H1 (cell line): ENCODE measurements at regions of chr13 and their contacts with region 1.

Region 1: DNA sequence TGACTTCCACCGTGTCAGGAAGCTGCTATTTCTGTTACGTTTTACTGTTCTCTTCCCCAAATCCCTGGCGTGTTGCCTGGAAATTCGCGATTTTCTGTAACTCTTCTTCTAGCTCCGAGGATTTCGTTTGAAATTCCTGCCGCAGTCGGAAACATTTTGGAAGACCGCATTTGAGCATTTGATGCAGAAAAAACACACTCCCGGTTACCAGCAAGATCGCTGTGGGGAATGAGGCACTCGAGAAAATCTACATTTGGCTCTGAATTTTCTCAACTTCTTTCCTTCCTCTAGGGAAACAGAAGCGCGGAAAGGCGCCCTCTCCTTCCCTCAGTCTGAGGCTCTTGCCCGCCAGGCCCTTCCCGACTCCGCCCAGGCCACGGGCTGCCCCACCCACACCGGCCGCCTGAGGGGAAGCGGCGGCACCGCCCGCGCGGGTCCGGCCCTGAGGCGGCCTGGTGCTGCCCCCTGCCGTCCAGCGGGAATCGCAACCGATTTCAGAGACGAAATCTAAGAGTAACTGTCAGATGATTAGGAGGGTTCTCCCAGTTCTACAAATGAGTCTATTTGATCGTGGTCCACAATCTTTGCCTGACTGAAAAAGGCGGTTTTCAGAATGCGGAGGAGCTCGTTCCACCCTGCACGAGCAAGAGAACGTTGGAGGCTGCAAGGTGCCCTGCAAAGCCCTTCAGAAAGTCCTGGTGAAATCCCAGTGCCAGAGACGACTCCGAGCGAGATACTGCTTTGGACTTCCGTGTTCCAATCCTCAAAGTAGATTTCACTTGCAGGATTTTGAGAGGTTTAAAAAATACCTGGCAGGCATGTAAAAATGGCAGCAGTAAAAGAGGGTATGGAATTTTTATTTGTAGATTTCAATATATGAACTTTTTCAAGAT is 18.4 kb upstream of the TUBGCP3 start:
- DNase-seq: peak; percentile 57 to 98
- H3K4me3 ChIP-seq: peak overlapping the region; percentile 35 to 71 (median 50); a peak in 7 of 8 replicates
- H3K27ac ChIP-seq: peak overlapping the region; percentile 28; the same call in 1 of the 2 replicates
- H3K4me1 ChIP-seq: peaks cover 0 to 2% (median under 1%) of the 10 kb centered on the region in 4 experiments; a peak in 1 of 7 replicates
- H3K27me3 ChIP-seq: peaks cover 0 to 6% (median 3%) of the 10 kb centered on the region in 4 experiments; a peak in 4 of 7 replicates
- CTCF ChIP-seq: peak; percentile 85 to 90 (median 88)
- EP300 ChIP-seq: no peak
- POLR2A ChIP-seq: peak; percentile 73 to 83
- RAD21 ChIP-seq: peak; percentile 90 to 96

Region 2: GRCh38 chr13:112513761-112514160 is 92.6 kb before region 1 on chr13:
- CTCF ChIA-PET with region 1: no interaction called
- POLR2A ChIA-PET with region 1: no interaction called
- DNase-seq: no peak
- H3K4me3 ChIP-seq: no peak overlapping the region
- H3K27ac ChIP-seq: no peak overlapping the region
- H3K4me1 ChIP-seq: no peaks in the 10 kb centered on the region
- H3K27me3 ChIP-seq: no peaks in the 10 kb centered on the region
- CTCF ChIP-seq: no peak
- EP300 ChIP-seq: no peak
- POLR2A ChIP-seq: no peak
- RAD21 ChIP-seq: no peak

Region 3: DNA sequence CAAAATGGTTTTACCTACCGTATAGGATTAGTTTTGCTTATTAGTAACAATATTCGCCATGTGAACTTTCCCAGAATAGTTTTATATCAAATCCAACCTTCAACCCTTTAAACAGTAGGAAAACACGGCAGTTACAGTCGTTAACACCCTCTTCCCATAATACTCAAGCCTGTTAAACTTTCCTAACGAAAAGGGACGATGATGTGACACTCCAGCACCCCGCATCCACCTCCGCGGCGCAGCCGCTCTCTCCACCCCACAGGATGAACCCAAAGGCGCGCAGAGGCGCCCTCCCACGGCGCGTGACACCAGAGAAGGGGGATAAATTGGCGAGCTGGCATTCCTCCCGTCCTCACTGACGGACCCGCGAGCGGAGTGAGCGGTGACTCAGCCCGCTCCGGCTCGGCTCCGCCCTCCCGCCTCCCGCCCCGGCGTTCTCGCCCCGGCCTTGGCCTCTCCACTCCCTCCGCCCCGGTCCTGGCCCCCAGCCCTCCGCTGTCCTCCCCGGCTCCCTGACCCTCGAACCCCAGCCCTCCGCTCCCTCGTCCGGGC is 19.1 kb before region 1 on chr13:
- CTCF ChIA-PET with region 1: interaction called, 6 read pairs
- POLR2A ChIA-PET with region 1: interaction called, 14 read pairs
- DNase-seq: peak in 1 of 2 experiments; percentile 83
- H3K4me3 ChIP-seq: peak overlapping the region; percentile 65 to 95 (median 68)
- H3K27ac ChIP-seq: peak overlapping the region; percentile 92
- H3K4me1 ChIP-seq: peaks cover 0 to 7% (median 5%) of the 10 kb centered on the region in 4 experiments; a peak in 6 of 7 replicates
- H3K27me3 ChIP-seq: peaks cover 0 to 4% (median 2%) of the 10 kb centered on the region in 4 experiments; a peak in 3 of 7 replicates
- CTCF ChIP-seq: no peak
- EP300 ChIP-seq: no peak
- POLR2A ChIP-seq: peak in 1 of 2 experiments; percentile 53; a peak in 2 of 3 replicates
- RAD21 ChIP-seq: no peak

Region 4: GRCh38 chr13:112616586-112617362 is 10.4 kb after region 1 on chr13:
- CTCF ChIA-PET with region 1: interaction called, 14 read pairs
- POLR2A ChIA-PET with region 1: interaction called, 4 read pairs
- DNase-seq: peak in 1 of 2 experiments; percentile 53
- H3K4me3 ChIP-seq: no peak overlapping the region
- H3K27ac ChIP-seq: no peak overlapping the region
- H3K4me1 ChIP-seq: no peaks in the 10 kb centered on the region
- H3K27me3 ChIP-seq: no peaks in the 10 kb centered on the region; a peak in 1 of 7 replicates
- CTCF ChIP-seq: peak; percentile 62 to 90 (median 84)
- EP300 ChIP-seq: no peak
- POLR2A ChIP-seq: no peak
- RAD21 ChIP-seq: peak; percentile 54 to 67

Region 5: GRCh38 chr13:112624602-112625430 is 18.5 kb after region 1 on chr13:
- CTCF ChIA-PET with region 1: interaction called, 10 read pairs
- POLR2A ChIA-PET with region 1: interaction called, 4 read pairs
- DNase-seq: no peak
- H3K4me3 ChIP-seq: no peak overlapping the region
- H3K27ac ChIP-seq: no peak overlapping the region
- H3K4me1 ChIP-seq: no peaks in the 10 kb centered on the region
- H3K27me3 ChIP-seq: no peaks in the 10 kb centered on the region
- CTCF ChIP-seq: no peak
- EP300 ChIP-seq: no peak
- POLR2A ChIP-seq: no peak
- RAD21 ChIP-seq: no peak